Activated CD4-positive, alpha-beta memory T cell treated with anti-CD3 and anti-CD28 coated beads, Interleukin-2, amount 10 ng/mL, durations not matched to agents 7 days and 5 days (primary cell): ENCODE measurements at regions of chr1 and their contacts with region 1.

Region 1: DNA sequence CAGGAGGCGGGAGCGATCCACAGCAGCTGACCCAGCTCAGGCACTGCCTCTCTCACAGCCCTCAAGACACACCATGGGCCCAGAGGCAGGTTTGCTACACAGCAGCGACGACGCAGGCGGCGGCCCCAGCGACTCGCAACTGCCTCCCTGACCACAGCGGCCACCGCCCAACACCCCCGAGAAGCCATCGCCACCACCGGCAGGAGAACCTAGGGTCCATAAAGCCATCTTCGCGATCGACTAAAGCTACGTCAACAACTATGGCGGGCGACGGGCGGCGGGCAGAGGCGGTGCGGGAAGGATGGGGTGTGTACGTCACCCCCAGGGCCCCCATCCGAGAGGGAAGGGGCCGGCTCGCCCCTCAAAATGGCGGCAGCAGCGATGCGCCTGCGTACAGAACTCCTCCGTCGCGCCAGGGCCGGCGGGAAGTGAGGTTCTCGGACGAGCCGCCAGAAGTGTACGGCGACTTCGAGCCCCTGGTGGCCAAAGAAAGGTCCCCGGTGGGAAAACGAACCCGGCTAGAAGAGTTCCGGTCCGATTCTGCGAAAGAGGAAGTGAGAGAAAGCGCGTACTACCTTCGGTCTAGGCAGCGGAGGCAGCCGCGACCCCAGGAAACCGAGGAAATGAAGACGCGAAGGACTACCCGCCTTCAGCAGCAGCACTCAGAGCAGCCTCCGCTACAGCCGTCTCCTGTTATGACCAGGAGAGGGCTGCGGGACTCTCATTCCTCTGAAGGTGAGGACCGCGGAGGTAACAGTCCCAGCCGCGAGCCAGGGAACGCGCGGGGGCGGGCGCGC is at the start of gene TOR1AIP1:
- DNase-seq: peak; percentile 98
- H3K4me3 Mint-ChIP-seq: peak within 1 kb of the TSS; percentile 92
- H3K27ac Mint-ChIP-seq: peak within 1 kb of the TSS; percentile 99
- H3K4me1 Mint-ChIP-seq: peaks cover 61% of the 10 kb centered on the region
- H3K27me3 Mint-ChIP-seq: no peaks in the 10 kb centered on the region
- total RNA-seq, gene TOR1AIP1: 84.8 to 88.5 TPM

Region 2: GRCh38 chr1:179807731-179808485 is 74.5 kb before region 1 on chr1:
- CTCF ChIA-PET with region 1: no interaction called
- POLR2A ChIA-PET with region 1: no interaction called
- DNase-seq: no peak
- H3K4me3 Mint-ChIP-seq: no peak overlapping the region
- H3K27ac Mint-ChIP-seq: no peak overlapping the region
- H3K4me1 Mint-ChIP-seq: no peaks in the 10 kb centered on the region
- H3K27me3 Mint-ChIP-seq: peaks cover 3% of the 10 kb centered on the region

Region 3: DNA sequence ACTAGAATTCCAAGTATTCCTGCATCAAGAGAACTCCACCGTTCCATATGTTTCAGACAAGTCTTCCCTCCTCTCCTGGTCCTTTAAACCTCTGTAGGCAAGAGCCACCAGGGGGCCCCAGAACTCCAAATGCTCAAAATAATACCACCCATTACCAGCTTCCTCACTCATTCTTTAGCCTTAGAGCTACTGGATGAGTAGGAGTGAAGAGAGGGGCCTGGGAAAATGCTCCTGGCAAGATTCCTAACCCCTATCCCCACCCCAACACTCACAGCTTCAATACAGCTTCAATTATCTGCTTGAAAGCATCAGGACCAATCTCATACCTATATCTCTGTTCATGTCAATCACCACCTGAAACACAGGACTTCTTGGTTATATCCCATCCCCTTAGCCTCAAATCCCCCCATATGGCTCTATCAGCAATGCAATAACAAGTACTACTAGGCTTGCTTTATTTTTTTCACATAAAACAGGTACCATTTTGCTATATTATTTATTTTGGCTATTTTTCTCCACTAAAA is 14.6 kb before region 1 on chr1:
- CTCF ChIA-PET with region 1: interaction called, 5 read pairs
- POLR2A ChIA-PET with region 1: interaction called, 13 read pairs
- DNase-seq: peak; percentile 53
- H3K4me3 Mint-ChIP-seq: no peak overlapping the region
- H3K27ac Mint-ChIP-seq: no peak overlapping the region
- H3K4me1 Mint-ChIP-seq: peaks cover 8% of the 10 kb centered on the region
- H3K27me3 Mint-ChIP-seq: no peaks in the 10 kb centered on the region

Region 4: GRCh38 chr1:179910934-179911333 is 28.5 kb after region 1 on chr1:
- CTCF ChIA-PET with region 1: interaction called, 5 read pairs
- POLR2A ChIA-PET with region 1: interaction called, 12 read pairs
- DNase-seq: no peak
- H3K4me3 Mint-ChIP-seq: no peak overlapping the region
- H3K27ac Mint-ChIP-seq: no peak overlapping the region
- H3K4me1 Mint-ChIP-seq: peaks cover 7% of the 10 kb centered on the region
- H3K27me3 Mint-ChIP-seq: no peaks in the 10 kb centered on the region

Region 5: DNA sequence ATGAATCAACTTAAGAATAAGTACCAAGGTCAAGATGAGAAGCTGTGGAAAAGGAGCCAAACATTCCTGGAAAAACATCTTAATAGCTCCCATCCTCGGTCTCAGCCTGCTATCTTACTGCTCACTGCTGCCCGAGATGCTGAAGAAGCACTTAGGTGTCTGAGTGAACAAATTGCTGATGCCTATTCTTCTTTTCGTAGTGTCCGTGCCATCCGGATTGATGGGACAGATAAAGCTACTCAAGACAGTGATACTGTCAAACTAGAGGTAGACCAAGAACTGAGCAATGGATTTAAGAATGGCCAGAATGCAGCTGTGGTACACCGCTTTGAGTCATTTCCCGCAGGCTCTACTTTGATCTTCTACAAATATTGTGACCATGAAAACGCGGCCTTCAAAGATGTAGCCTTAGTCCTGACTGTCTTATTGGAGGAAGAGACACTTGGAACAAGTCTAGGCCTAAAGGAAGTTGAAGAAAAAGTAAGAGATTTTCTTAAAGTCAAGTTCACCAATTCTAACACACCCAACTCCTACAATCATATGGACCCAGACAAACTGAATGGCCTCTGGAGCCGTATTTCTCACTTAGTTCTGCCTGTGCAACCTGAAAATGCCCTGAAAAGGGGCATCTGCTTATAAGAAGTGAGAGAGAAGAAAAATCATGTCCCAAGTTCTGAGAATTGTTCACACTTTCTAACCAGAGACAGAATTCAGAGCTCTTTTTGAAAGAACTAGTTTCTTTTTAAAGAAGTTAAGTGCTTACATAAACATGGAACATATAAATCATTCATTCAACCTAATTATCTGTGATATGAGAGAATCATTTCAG is 35.4 kb after region 1 on chr1:
- CTCF ChIA-PET with region 1: no interaction called
- POLR2A ChIA-PET with region 1: interaction called, 12 read pairs
- DNase-seq: no peak
- H3K4me3 Mint-ChIP-seq: no peak overlapping the region
- H3K27ac Mint-ChIP-seq: peak overlapping the region; percentile 42
- H3K4me1 Mint-ChIP-seq: peaks cover 15% of the 10 kb centered on the region
- H3K27me3 Mint-ChIP-seq: no peaks in the 10 kb centered on the region

Region 6: DNA sequence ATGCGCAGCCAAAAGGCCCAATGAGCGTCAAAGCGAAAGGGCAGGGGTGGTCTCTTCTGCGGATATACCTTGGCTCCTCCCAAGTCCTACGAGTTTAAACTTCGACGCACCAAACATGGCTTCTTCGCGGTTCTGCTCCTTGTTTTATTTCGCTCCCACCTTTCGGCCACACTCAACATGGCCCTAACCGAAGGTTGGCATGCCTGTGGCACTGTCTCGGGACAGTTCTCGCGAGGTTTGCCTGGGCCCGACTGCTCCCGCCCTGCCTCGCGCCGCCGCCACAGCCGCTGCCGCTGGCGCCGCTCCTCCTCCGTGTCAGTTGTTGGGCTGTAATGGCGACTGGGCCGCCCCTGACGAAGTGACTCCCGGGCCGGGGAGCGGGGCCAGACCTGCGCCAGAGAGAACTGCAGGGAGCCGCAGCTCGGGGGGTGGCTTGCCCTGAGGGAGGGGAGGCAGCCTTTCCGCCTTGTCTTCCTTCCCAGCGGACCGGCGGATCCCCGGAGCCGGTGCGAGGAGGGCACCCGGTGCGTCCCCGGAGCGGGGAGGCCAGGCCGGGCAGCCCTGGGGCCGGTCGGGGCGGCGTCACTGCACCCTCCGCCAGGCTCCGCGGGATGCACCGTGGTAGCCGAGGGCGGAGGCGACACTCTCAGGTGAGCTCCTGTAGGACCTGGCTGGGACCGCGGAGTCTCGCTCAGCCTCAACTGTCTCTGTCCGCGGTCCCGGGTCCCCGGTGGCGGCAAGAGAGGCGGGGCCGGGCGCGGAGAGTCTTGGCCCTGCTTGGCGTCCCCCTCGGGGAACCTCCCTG is 72.3 kb after region 1 on chr1 and contains the start of gene CEP350:
- CTCF ChIA-PET with region 1: interaction called, 9 read pairs
- POLR2A ChIA-PET with region 1: interaction called, 90 read pairs
- DNase-seq: peak; percentile 98
- H3K4me3 Mint-ChIP-seq: peak within 1 kb of the TSS; percentile 86
- H3K27ac Mint-ChIP-seq: peak within 1 kb of the TSS; percentile 99
- H3K4me1 Mint-ChIP-seq: peaks cover 39% of the 10 kb centered on the region
- H3K27me3 Mint-ChIP-seq: no peaks in the 10 kb centered on the region
- total RNA-seq, gene CEP350: 52.6 to 57.0 TPM

Region 7: GRCh38 chr1:180003026-180003695 is 120.7 kb after region 1 on chr1:
- CTCF ChIA-PET with region 1: no interaction called
- POLR2A ChIA-PET with region 1: no interaction called
- DNase-seq: no peak
- H3K4me3 Mint-ChIP-seq: no peak overlapping the region
- H3K27ac Mint-ChIP-seq: no peak overlapping the region
- H3K4me1 Mint-ChIP-seq: no peaks in the 10 kb centered on the region
- H3K27me3 Mint-ChIP-seq: no peaks in the 10 kb centered on the region

Region 8: DNA sequence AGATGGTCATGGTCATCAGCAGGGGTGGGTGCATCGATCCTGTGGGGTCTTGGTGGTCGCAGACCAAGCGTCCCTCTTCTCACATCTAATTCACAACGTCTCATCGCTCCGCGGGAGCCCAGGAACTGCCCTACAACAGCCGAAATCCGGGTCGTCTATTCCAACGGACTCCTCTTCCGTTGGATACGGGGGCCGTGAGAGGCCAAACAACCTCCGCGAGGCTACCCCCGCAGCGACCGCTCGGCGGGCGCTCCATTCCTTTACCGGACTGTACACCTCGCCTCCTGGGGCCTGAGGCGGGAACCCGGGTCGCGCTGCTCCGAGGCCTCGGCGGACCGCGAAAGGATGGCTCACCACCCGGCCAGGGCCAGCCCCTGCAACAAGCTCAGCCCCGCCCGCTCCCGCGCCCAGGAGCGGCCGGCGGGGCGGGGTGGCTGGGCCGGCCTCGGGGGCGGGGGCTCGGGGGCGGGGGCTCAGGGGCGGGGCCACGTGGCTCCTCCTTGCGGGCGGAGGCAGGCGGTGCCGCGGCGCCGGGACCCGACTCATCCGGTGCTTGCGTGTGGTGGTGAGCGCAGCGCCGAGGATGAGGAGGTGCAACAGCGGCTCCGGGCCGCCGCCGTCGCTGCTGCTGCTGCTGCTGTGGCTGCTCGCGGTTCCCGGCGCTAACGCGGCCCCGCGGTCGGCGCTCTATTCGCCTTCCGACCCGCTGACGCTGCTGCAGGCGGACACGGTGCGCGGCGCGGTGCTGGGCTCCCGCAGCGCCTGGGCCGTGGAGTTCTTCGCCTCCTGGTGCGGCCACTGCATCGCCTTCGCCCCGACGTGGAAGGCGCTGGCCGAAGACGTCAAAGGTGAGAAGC is 272.1 kb after region 1 on chr1 and contains the start of gene QSOX1:
- CTCF ChIA-PET with region 1: no interaction called
- POLR2A ChIA-PET with region 1: interaction called, 32 read pairs
- DNase-seq: peak; percentile 92
- H3K4me3 Mint-ChIP-seq: peak within 1 kb of the TSS; percentile 92
- H3K27ac Mint-ChIP-seq: peak within 1 kb of the TSS; percentile 79
- H3K4me1 Mint-ChIP-seq: peaks cover 28% of the 10 kb centered on the region
- H3K27me3 Mint-ChIP-seq: no peaks in the 10 kb centered on the region
- total RNA-seq, gene QSOX1: 28.9 to 35.1 TPM